Heart right ventricle (tissue), 16 donors: ENCODE measurements at regions of chr21 and their contacts with region 1.

Region 1: DNA sequence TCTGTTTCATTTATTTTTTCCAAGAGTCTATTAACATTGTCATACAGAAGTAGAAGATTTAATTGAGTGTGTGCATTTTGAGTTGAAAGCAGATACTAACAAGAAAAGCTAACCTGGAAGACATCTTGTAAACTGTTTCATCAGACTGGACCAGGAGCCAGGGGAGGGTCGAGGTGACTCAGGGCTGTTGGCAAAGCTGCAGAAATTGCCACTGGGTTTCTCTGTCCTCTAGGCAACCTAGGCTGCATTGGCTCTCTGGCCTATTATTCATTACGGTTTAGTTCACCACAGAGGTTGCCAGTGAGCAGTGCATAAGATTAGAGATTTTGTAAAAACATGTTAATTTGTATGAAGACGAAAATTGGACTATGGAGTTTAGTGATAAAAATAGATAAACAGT is 27.5 kb downstream of the ERG start:
- DNase-seq: no peak
- ATAC-seq: no peak
- H3K4me3 ChIP-seq: no peak overlapping the region
- H3K27ac ChIP-seq: peak overlapping the region in 3 of 10 donors; percentile 67 to 88 (median 74)
- H3K4me1 ChIP-seq: peaks cover 0 to 71% (median 51%) of the 10 kb centered on the region in 9 donors
- H3K27me3 ChIP-seq: peaks cover 0 to 2% (median 0%) of the 10 kb centered on the region in 7 donors
- CTCF ChIP-seq: no peak

Region 2: DNA sequence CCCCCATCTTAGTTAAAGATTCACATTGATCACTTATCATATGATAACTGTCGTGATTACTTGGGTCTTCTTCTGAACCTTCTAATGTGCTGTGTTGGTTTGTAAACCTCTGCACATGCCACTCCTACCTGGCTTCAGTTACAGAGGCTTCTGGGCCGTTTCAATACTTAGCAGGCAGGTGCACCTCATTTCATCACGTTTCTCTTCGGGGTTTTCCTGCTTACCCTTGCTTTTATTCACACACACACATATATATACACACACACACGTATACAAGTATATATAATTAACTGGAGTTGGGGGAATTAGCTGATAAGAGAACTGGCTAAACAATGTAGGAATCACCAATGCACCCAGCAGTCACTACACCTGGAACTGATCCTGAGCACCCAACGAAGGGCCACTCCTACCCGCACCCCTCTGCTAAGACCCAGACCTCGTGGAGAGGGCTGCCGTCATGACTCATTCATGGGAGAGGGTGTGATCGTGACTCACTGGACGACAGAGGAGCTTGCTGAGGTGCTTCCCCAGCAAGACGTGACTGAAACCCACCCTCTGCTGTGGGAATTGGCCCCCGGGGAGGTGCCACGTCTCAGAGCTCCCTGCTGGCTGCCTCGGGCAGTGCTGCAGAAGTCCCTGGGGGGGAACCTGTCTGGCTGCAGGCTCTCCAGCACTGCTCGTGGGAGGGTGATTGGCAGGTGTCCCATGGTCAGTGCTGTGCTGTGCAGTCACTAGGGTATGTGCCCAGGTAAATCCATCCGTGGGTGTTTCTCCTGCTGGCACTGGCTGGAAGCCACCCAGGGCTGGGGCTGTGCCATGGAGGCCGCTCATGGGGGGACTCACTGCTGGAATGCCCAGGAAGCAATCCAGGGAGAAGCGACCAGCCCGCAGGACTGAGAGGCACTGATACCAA is 937.6 kb before region 1 on chr21:
- intact Hi-C with region 1: no loop called
- DNase-seq: peak in 1 of 2 donors; percentile 25
- ATAC-seq: peak in 5 of 8 donors; percentile 35 to 63 (median 55)
- H3K4me3 ChIP-seq: no peak overlapping the region
- H3K27ac ChIP-seq: peak overlapping the region in 1 of 10 donors; percentile 21
- H3K4me1 ChIP-seq: peaks cover 0 to 29% (median 12%) of the 10 kb centered on the region in 9 donors
- H3K27me3 ChIP-seq: peaks cover 0 to 21% (median 0%) of the 10 kb centered on the region in 7 donors
- CTCF ChIP-seq: peak in 2 of 9 donors; percentile 14 to 24

Region 3: DNA sequence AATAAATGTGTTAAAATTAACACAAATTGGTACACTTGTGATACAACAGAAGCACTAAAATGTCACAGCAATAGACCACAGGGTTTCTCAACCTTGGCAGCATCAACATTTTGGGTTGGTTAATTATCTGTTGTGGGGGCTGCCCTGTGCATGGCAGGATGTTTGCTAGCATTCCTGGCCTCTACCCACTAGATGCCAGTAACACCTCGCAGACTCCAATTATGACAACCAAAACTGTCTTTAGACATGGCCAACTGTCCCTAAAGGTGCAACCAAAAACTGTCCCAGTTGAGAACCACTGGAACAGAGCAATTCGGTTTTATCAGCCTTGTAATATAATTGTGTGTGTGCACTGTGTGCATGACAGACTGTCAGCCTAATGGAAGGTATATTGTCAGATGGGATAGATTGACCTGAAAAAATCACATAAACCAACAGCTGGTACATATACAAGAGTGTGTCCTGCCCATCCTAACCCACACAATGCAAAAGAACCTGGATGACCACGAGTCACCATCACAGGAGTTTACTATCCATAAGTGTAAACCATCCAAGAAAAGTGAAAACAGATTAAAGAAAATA is 41.0 kb after region 1 on chr21:
- intact Hi-C with region 1: no loop called
- DNase-seq: no peak
- ATAC-seq: no peak
- H3K4me3 ChIP-seq: no peak overlapping the region
- H3K27ac ChIP-seq: no peak overlapping the region
- H3K4me1 ChIP-seq: peaks cover 0 to 8% (median 4%) of the 10 kb centered on the region in 9 donors
- H3K27me3 ChIP-seq: no peaks in the 10 kb centered on the region
- CTCF ChIP-seq: no peak

Region 4: GRCh38 chr21:38805328-38806152 is 334.8 kb after region 1 on chr21 and contains the start of gene ETS2:
- intact Hi-C with region 1: no loop called
- DNase-seq: peak; percentile 91 to 94
- ATAC-seq: peak; percentile 88 to 94 (median 92)
- H3K4me3 ChIP-seq: peak within 1 kb of the TSS; percentile 68 to 100 (median 92)
- H3K27ac ChIP-seq: peak within 1 kb of the TSS; percentile 91 to 99 (median 98)
- H3K4me1 ChIP-seq: peaks cover 0 to 39% (median 16%) of the 10 kb centered on the region in 9 donors
- H3K27me3 ChIP-seq: no peaks in the 10 kb centered on the region
- CTCF ChIP-seq: peak in 2 of 9 donors; percentile 6 to 31
- total RNA-seq, gene ETS2: 27.5 to 81.5 (median 46.5) TPM

Region 5: DNA sequence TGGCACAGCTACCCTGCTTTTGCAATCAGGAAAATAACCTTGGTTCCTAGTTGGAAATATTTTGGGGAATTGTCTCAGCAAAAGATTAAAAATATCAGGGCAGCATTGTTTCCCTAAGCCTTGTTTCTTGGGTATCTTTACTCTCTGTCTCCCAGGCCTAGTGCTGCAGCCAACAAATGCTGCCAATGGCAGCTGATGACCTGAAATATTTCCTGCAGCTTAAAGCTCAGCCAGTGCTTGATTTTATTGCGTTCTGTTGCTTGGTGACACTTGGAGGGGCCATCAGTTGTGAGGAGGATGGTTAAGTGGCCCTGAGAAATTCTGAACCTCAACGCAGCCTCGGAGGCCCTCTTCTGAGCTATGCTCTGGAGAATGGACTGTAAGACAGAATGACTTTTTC is 1082.6 kb after region 1 on chr21:
- intact Hi-C with region 1: loop called in 1 of 10 experiments (anchors 5 kb)
- DNase-seq: no peak
- ATAC-seq: peak in 3 of 8 donors; percentile 28 to 52 (median 42)
- H3K4me3 ChIP-seq: no peak overlapping the region
- H3K27ac ChIP-seq: no peak overlapping the region
- H3K4me1 ChIP-seq: peaks cover 0 to 12% (median 0%) of the 10 kb centered on the region in 9 donors
- H3K27me3 ChIP-seq: no peaks in the 10 kb centered on the region
- CTCF ChIP-seq: no peak